BJ (cell line): ENCODE measurements at regions of chr1 and their contacts with region 1.

Region 1: DNA sequence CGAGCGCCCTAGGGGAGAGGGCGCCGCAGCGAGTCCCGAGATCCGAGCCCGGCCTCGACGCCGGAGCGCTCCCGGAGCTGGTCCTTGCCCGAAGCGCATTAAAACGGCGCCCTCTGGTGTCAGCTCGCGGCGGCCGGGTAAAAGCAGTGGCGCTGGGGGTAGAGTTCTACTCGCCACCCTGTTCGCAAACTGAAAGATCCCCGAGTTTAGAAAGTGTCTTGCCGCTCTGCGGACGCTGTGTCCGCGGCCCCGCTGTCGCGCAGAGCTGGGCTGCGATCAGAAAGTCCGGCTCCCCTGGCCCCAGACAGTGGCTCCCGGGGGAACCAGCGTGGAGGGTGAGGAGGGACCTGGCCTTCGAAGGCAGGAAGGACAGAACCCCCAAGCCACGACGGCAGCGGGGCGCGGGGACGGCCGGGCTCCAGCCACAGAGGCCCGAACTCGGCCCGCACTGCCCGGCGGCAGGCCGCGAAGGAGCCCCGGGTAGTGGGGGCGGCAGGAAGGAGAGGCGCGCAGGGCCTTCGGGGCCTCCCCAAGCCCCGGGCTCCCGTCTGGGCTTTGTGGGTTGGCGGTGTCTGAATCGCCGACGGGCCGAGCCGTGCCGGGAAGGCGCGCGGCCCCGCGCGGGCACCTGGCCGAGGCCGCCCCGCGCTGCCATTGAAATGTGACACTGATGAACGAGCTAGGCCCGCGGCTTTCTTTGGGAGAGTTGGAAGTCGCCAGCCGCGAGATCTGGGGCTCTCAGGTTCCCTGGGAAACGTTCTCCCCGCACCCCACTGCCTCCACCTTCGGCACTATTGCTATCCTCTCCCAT is 39.1 kb upstream of the NFIA start:
- DNase-seq: no peak
- H3K4me3 ChIP-seq: peak overlapping the region; percentile 31
- H3K27me3 ChIP-seq: 0 out of 2 replicates have a peak, but pooled peaks cover 2% of the 10 kb centered on the region
- CTCF ChIP-seq: peak; percentile 95

Region 2: GRCh38 chr1:59971464-59971911 is 1071.7 kb before region 1 on chr1:
- CTCF ChIA-PET with region 1: interaction called, 31 read pairs
- POLR2A ChIA-PET with region 1: no interaction called
- DNase-seq: no peak
- H3K4me3 ChIP-seq: no peak overlapping the region
- H3K27me3 ChIP-seq: peaks cover 9% of the 10 kb centered on the region
- CTCF ChIP-seq: peak; percentile 93

Region 3: GRCh38 chr1:60848583-60849188 is 194.5 kb before region 1 on chr1:
- CTCF ChIA-PET with region 1: interaction called, 64 read pairs
- POLR2A ChIA-PET with region 1: no interaction called
- DNase-seq: peak; percentile 16
- H3K4me3 ChIP-seq: no peak overlapping the region
- H3K27me3 ChIP-seq: no peaks in the 10 kb centered on the region
- CTCF ChIP-seq: peak; percentile 54

Region 4: DNA sequence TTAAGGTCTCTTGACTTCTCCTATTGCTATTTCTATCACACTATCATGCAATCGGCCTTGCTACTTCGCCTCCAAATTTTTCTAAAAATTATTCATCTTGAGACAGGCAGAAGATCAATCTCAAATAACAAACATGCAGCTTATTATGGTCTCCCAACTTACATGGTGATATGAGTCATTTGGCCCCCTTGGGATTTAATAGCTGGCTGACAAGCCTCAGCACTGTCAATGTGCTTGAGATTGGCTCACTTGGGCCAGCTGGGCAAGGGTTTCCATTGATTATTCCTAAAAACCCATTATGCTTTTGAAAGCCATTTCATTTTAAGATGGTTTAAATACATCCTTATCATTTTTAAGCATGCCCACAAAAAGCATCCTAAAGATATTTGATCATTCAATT is 185.4 kb before region 1 on chr1:
- CTCF ChIA-PET with region 1: interaction called, 10 read pairs
- POLR2A ChIA-PET with region 1: no interaction called
- DNase-seq: no peak
- H3K4me3 ChIP-seq: no peak overlapping the region
- H3K27me3 ChIP-seq: no peaks in the 10 kb centered on the region; the same call in 1 of the 2 replicates
- CTCF ChIP-seq: no peak

Region 5: GRCh38 chr1:60969971-60970509 is 73.2 kb before region 1 on chr1:
- CTCF ChIA-PET with region 1: interaction called, 21 read pairs
- POLR2A ChIA-PET with region 1: no interaction called
- DNase-seq: no peak
- H3K4me3 ChIP-seq: no peak overlapping the region
- H3K27me3 ChIP-seq: peaks cover 3% of the 10 kb centered on the region
- CTCF ChIP-seq: peak; percentile 29

Region 6: GRCh38 chr1:60978421-60979357 is 64.5 kb before region 1 on chr1:
- CTCF ChIA-PET with region 1: interaction called, 49 read pairs
- POLR2A ChIA-PET with region 1: no interaction called
- DNase-seq: no peak
- H3K4me3 ChIP-seq: no peak overlapping the region
- H3K27me3 ChIP-seq: no peaks in the 10 kb centered on the region
- CTCF ChIP-seq: peak; percentile 78